Left ventricle myocardium superior (tissue), 1 donor: ENCODE measurements at regions of chr18 and their contacts with region 1.

Region 1: DNA sequence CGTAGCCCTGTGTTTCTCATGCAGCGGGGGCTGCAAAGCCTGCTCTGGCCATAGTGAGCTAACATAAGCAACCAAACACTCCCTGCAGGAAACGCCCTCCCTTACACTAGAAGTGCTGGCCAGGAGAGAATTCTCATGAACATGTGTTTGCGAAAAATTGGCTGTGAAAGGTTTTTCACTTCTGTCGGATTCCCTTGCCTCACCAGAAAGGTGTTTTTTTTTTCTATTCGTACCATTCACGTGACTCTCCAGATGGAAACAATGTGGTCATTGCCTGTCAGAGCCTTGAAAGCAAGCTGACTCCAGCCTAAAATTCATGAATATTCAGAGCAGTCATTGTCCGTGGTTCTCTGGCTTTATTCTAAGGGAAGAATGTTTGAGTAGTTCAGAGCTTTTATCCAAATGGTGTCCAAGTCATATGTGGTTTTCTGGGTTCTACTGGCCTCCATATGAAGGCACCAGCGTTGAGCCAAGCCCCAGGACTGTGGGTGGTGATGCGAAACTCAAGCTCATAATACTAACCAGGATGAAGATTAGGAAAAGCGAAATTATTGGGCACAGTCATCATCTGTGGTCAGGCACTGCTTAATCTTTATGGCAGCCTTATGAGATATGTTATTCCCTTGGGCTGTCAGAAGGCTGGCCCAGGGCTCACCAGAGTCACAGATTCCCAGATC is 236.4 kb downstream of the ALPK2 start:
- DNase-seq: no peak
- ATAC-seq: peak; percentile 60

Region 2: GRCh38 chr18:58202406-58202730 is 190.1 kb before region 1 on chr18:
- intact Hi-C with region 1: no loop called
- DNase-seq: no peak
- ATAC-seq: peak; percentile 11

Region 3: DNA sequence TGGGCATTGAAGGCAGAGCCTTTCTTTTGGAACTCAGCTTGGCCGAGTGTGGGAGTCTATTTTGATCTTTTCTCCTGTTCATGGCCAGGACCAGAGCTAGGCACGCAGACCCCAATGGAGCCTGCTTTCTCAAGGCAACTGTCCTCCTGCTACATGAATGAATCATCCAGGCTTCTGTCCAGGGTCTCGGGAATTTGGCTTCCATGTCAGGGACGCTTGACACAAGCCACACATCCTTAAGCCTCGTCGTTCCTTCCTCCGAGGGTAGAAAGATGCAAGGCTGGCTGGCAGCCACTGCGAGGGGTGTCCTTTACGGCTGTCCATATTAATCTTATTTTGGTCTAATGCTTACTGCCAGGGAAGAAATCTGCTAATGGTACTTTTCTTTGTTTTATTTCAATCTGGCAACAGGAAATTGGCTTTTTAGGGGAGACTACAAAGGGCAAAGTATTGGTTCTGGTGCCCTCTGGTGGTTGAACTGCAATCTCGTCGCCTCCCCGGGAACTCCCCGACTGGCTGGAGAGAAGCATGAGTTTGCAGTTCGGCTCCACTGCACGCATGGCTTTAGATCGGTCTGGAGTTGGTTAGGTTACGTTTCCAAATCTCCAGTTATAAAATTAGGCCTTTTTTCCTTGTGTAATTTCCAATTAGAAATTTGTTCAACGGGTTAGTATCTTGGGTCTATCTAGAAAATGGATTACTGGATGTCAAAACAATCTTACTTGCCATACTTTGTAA is 101.2 kb after region 1 on chr18:
- intact Hi-C with region 1: loop called (anchors 10 kb)
- DNase-seq: peak; percentile 69
- ATAC-seq: peak; percentile 90